ENCODE measurements at regions of chr17 and their contacts with region 1.

Region 1: DNA sequence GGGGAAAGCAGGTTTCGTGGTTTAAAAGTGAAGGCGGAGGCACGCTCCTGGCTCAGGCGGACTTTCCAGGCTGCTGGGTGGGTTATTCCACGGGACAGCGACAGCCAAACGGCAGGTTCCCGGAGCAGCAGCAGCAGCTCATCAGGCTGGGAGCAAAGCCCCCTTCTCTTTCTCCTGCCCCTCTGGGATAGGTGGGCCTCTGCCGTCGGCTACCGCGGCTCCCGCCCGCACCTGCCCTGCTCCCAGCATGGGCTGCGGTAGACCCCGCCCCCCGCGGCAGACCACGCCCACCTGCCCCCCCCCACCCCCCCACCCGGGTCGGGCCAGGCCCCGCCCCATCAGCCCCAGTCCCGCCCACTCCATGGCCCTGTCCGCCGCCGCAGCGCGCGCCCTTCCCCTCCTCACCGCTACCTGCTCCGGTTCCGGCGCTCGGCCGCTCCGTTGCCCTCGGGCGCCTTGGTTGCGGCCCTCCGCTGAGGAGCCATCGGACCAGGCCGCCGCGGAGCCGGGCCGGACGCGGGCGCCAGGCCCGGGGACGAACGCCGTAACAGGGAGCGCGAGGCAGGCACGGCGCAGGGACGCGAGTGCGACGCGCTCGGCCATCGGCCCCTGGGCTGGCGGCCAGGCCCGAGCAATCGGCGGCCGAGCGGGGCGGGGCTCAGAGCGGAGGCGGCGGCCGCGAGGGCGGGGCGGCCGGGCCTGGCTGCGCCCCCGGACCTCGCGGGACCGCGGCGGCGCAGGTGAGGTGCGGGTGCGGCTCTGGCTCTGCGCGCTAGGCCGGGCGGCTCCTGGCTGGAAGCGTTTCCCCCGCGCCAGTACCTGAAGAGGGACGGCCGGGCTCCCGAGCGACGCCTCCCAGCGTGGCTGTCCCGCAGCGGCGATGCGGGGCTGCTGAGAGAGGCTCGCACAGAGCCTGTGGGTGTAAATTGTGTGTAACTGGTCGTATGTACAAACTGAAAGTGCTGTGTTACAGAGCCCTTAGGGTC is at the starts of genes HEXD and OGFOD3:
- DNase-seq: peak; percentile 85
- H3K4me3 Mint-ChIP-seq: peak within 1 kb of the TSS; percentile 77
- H3K27ac Mint-ChIP-seq: peak within 1 kb of the TSS; percentile 60
- H3K4me1 Mint-ChIP-seq: peaks cover 22% of the 10 kb centered on the region
- H3K27me3 Mint-ChIP-seq: no peaks in the 10 kb centered on the region
- total RNA-seq, gene HEXD: 36.6 and 36.7 TPM in 2 replicates
- total RNA-seq, gene OGFOD3: 29.1 and 30.5 TPM in 2 replicates

Region 2: GRCh38 chr17:82037113-82037888 is 381.0 kb before region 1 on chr17 and contains the start of gene DCXR:
- intact Hi-C with region 1: loop called (anchors 10 kb)
- DNase-seq: peak; percentile 97
- H3K4me3 Mint-ChIP-seq: peak within 1 kb of the TSS; percentile 75
- H3K27ac Mint-ChIP-seq: peak within 1 kb of the TSS; percentile 87
- H3K4me1 Mint-ChIP-seq: peaks cover 13% of the 10 kb centered on the region
- H3K27me3 Mint-ChIP-seq: no peaks in the 10 kb centered on the region
- total RNA-seq, gene DCXR: 138 and 145 TPM in 2 replicates

Region 3: GRCh38 chr17:82230627-82231311 is 187.5 kb before region 1 on chr17:
- intact Hi-C with region 1: loop called (anchors 10 kb)
- DNase-seq: peak; percentile 64
- H3K4me3 Mint-ChIP-seq: peak overlapping the region; percentile 95
- H3K27ac Mint-ChIP-seq: no peak overlapping the region
- H3K4me1 Mint-ChIP-seq: peaks cover 8% of the 10 kb centered on the region
- H3K27me3 Mint-ChIP-seq: no peaks in the 10 kb centered on the region

Region 4: DNA sequence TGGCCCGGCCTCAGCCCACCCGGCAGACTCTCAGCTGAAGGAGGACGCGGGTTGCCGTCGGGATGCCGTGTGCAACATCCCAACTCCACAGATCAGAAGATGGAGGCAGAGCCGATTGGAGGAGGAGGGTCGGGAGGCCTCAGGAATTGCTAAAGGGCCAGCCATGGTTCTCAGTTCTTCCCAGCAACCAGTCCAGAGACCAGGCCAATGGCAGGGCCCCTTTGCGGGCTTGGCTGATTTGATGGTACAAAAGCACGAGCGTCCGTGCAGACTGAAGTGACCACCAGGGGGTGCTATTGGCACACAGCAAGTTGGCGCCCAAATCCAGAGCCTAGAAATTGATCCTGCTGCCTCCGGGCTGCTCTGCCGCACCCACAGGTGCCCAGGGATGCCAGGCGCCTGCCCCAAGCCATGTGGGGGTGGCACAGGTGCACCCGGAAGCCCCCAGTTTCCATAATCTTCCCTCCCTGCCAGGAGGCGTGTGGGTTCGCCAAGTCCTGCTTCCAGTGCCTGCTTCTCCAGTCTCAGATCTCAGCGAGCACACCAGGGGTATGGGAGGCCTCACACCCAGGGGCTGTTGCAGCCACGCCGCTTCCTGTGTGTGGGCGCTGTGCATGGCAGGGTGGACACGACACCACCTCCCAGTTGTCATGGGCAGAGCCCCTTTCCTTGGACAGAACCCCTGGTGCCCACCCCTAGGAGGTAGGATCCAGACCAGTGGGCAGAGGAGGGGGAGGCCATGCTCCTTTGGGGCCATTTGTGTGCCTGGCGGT is 66.4 kb before region 1 on chr17:
- intact Hi-C with region 1: loop called (anchors 1 kb)
- DNase-seq: peak; percentile 73
- H3K4me3 Mint-ChIP-seq: no peak overlapping the region
- H3K27ac Mint-ChIP-seq: no peak overlapping the region
- H3K4me1 Mint-ChIP-seq: peaks cover 4% of the 10 kb centered on the region
- H3K27me3 Mint-ChIP-seq: peaks cover 5% of the 10 kb centered on the region

Region 5: DNA sequence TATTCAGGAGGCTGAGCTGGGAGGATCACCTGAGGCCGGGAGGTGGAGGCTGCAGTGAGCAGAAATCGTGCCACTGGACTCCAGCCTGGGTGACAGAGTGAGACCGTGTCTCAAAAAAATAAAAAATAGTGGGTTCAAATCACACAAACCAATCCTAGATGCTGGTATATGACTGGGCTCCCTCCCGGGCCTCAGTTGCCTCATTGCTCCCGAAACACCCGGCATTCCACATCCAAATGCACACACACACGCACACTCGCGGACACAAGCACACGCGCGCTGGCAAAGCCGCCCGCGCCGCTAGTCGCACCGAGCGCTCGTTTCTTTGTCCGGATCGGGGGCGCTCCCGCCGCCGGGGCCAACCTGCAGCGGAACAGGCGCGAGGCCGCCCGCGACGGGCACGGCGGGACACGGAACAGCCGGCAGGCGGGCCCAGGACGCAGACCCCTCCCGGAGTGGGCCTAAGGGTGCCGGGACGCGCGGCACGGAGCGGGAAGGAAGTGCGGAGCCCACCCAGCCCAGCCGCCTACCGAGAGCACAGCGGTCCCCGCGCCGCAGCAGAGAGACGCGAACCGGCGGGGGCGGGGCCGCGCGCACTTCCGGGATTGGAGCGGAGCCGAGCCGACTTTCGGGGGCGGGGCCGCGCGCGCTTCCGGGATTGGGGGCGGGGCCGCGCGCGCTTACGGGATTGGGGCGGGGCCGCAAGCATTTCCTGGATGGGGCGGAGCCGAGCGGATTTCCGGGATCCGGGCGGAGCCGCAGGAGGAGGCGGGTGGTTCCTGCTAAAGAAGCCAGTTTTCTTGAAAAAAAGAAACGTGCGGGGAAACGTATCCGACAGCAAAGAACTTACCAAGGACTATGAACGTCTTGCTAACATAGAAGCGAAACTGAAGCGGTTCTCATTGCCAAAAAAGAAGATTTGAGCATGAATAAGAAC is 32.1 kb after region 1 on chr17 and contains the start of gene CYBC1:
- intact Hi-C with region 1: loop called (anchors 2 kb)
- DNase-seq: peak; percentile 91
- H3K4me3 Mint-ChIP-seq: peak within 1 kb of the TSS; percentile 99
- H3K27ac Mint-ChIP-seq: peak within 1 kb of the TSS; percentile 99
- H3K4me1 Mint-ChIP-seq: peaks cover 24% of the 10 kb centered on the region
- H3K27me3 Mint-ChIP-seq: no peaks in the 10 kb centered on the region
- total RNA-seq, gene CYBC1: 252 and 265 TPM in 2 replicates

Measured in activated T-helper 2 cell treated with anti-CD3 and anti-CD28 coated beads, Interferon-gamma antibody, Interleukin-2, Interleukin-4, amounts not matched to agents 10 μg/mL and 5 μg/mL and 100 μg/mL, durations not matched to agents 14 hours and 24 hours and 36 hours (primary cell).